Left ventricle myocardium superior (tissue), 1 donor: ENCODE measurements at regions of chr4 and their contacts with region 1.

Region 1: GRCh38 chr4:47933840-47934239 is 19.5 kb upstream of the NFXL1 start:
- DNase-seq: no peak
- ATAC-seq: peak; percentile 38

Region 2: GRCh38 chr4:47686294-47686872 is 247.5 kb before region 1 on chr4:
- intact Hi-C with region 1: loop called (anchors 10 kb)
- DNase-seq: peak; percentile 45
- ATAC-seq: peak; percentile 91

Region 3: GRCh38 chr4:48071121-48071612 is 137.3 kb after region 1 on chr4:
- intact Hi-C with region 1: no loop called
- DNase-seq: no peak
- ATAC-seq: no peak